PC-3 (cell line): ENCODE measurements at regions of chr4 and their contacts with region 1.

Region 1: DNA sequence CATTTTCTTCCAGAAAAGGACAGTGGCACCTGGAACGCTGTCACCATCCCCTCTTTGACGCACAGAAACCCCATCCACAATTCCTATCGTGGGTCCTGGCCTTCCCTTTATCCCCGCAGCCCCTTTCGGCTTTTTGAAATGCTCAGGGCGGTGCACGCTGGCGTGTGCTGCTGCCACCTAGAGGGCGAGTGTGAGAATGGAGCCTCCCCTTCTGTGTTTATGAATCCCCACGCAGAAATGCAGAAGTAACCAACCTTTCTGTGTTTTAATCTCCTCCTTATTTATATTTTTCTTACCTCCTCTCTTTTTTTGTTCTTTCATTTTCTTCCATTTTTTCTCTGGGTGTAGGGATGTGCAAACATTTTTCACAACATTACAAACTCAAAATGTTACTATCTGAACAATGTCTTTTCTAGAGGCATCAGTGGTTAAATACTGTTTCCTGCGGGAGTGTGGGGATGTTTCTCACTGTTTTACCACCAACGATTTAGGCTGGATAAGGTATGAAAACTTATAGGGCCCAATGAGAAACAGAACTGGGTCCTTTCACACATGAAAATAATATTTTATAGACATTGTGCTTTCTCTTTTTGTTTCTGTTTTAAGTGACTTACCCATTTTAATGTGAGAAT is 50.0 kb downstream of the TMA16 start:
- DNase-seq: peak; percentile 58
- ATAC-seq: peak; percentile 11; the same call in 1 of the 2 replicates
- H3K4me3 ChIP-seq: peak overlapping the region; percentile 29; the same call in 1 of the 2 replicates
- H3K27ac ChIP-seq: no peak overlapping the region
- H3K4me1 ChIP-seq: peaks cover 36% of the 10 kb centered on the region
- H3K27me3 ChIP-seq: no peaks in the 10 kb centered on the region
- CTCF ChIP-seq: peak; percentile 85

Region 2: DNA sequence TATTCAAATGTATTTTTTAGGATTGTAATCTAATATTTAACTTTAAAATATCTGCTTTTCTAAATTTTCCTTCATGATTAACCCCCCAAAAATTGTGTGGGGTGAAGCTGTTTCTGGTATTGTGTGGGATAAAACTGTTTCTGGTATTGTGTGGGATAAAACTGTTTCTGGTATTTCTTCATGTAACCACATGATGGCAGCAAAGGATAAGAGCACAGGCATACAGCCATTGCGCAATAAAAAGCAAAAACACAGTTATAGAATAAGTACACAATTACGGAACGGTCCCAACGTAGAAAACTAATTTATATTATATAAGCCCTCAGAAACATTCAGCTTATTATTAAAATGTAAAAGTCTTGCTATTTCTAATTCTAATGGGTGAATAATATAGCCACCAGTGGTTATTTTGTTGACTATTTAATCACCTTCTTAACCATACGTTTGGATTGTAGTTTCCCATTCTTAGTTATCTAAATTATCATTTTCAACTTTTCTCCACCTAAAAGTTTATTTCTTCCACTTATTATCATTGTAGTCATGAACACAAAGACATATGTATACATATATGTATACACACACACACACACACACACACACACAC is 1046.9 kb before region 1 on chr4:
- CTCF ChIA-PET with region 1: no interaction called
- POLR2A ChIA-PET with region 1: no interaction called
- intact Hi-C with region 1: loop called (anchors 5 kb)
- DNase-seq: peak; percentile 42
- ATAC-seq: peak; percentile 38
- H3K4me3 ChIP-seq: no peak overlapping the region
- H3K27ac ChIP-seq: no peak overlapping the region
- H3K4me1 ChIP-seq: no peaks in the 10 kb centered on the region
- H3K27me3 ChIP-seq: no peaks in the 10 kb centered on the region
- CTCF ChIP-seq: peak; percentile 72

Region 3: GRCh38 chr4:163107754-163108153 is 436.8 kb before region 1 on chr4:
- CTCF ChIA-PET with region 1: no interaction called
- POLR2A ChIA-PET with region 1: no interaction called
- intact Hi-C with region 1: loop called (anchors 5 kb)
- DNase-seq: peak; percentile 30
- ATAC-seq: no peak
- H3K4me3 ChIP-seq: no peak overlapping the region
- H3K27ac ChIP-seq: no peak overlapping the region
- H3K4me1 ChIP-seq: no peaks in the 10 kb centered on the region
- H3K27me3 ChIP-seq: no peaks in the 10 kb centered on the region
- CTCF ChIP-seq: peak; percentile 48

Region 4: GRCh38 chr4:163378661-163379060 is 165.9 kb before region 1 on chr4:
- CTCF ChIA-PET with region 1: no interaction called
- POLR2A ChIA-PET with region 1: no interaction called
- intact Hi-C with region 1: loop called (anchors 10 kb)
- DNase-seq: no peak
- ATAC-seq: no peak
- H3K4me3 ChIP-seq: no peak overlapping the region
- H3K27ac ChIP-seq: no peak overlapping the region
- H3K4me1 ChIP-seq: no peaks in the 10 kb centered on the region; the same call in 1 of the 2 replicates
- H3K27me3 ChIP-seq: no peaks in the 10 kb centered on the region
- CTCF ChIP-seq: no peak

Region 5: GRCh38 chr4:163494360-163495162 is 50.0 kb before region 1 on chr4 and contains the start of gene TMA16:
- CTCF ChIA-PET with region 1: interaction called, 4 read pairs
- POLR2A ChIA-PET with region 1: interaction called, 3 read pairs
- intact Hi-C with region 1: loop called (anchors 1 kb)
- DNase-seq: peak; percentile 90
- ATAC-seq: peak; percentile 90
- H3K4me3 ChIP-seq: peak within 1 kb of the TSS; percentile 97
- H3K27ac ChIP-seq: peak within 1 kb of the TSS; percentile 98
- H3K4me1 ChIP-seq: peaks cover 4% of the 10 kb centered on the region; the same call in 1 of the 2 replicates
- H3K27me3 ChIP-seq: no peaks in the 10 kb centered on the region
- CTCF ChIP-seq: no peak
- total RNA-seq, gene TMA16: 39.5 and 49.1 TPM in 2 replicates

Region 6: DNA sequence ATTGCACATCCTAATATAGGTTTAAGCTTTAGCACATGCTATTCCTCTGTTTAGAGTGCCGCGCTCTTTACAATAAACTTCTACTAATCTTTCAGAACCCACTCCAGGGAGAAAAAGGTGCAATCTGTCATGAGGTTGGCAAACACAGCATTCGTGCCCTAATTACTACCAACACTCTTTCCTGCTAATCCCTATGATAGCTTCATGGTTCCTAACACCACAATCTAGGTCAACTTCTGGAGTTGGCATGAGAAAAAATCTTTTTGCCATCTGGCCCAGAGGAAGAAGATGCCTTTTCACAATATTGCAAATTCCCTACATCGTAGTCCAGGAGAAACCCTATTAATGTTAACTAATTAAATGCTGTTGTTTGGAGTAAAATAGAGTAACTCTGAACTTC is 10.5 kb before region 1 on chr4:
- CTCF ChIA-PET with region 1: no interaction called
- POLR2A ChIA-PET with region 1: no interaction called
- intact Hi-C with region 1: no loop called
- DNase-seq: no peak
- ATAC-seq: no peak
- H3K4me3 ChIP-seq: no peak overlapping the region
- H3K27ac ChIP-seq: no peak overlapping the region
- H3K4me1 ChIP-seq: peaks cover 7% of the 10 kb centered on the region
- H3K27me3 ChIP-seq: no peaks in the 10 kb centered on the region
- CTCF ChIP-seq: no peak